ENCODE measurements at regions of chr19 and their contacts with region 1.

Region 1: GRCh38 chr19:55437410-55438075 is 5.6 kb downstream of the SHISA7 start:
- DNase-seq: peak; percentile 87 to 89
- ATAC-seq: peak; percentile 72 to 90
- H3K4me3 ChIP-seq: no peak overlapping the region
- H3K27ac ChIP-seq: no peak overlapping the region
- H3K4me1 ChIP-seq: peaks cover 12% of the 10 kb centered on the region
- CTCF ChIP-seq: no peak
- EP300 ChIP-seq: no peak
- POLR2A ChIP-seq: no peak
- RAD21 ChIP-seq: no peak

Region 2: GRCh38 chr19:55452749-55453346 is 15.3 kb after region 1 on chr19:
- CTCF ChIA-PET with region 1: interaction called, 11 read pairs
- POLR2A ChIA-PET with region 1: no interaction called
- DNase-seq: peak; percentile 66 to 80
- ATAC-seq: peak in 1 of 2 experiments; percentile 63; a peak in 3 of 6 replicates
- H3K4me3 ChIP-seq: no peak overlapping the region
- H3K27ac ChIP-seq: no peak overlapping the region
- H3K4me1 ChIP-seq: peaks cover 31% of the 10 kb centered on the region
- CTCF ChIP-seq: no peak
- EP300 ChIP-seq: no peak
- POLR2A ChIP-seq: no peak
- RAD21 ChIP-seq: no peak

Region 3: GRCh38 chr19:55484593-55485438 is 47.3 kb after region 1 on chr19 and contains the start of gene NAT14:
- CTCF ChIA-PET with region 1: no interaction called
- POLR2A ChIA-PET with region 1: no interaction called
- DNase-seq: peak; percentile 77 to 94
- ATAC-seq: peak; percentile 33 to 71
- H3K4me3 ChIP-seq: peak within 1 kb of the TSS; percentile 75
- H3K27ac ChIP-seq: peak within 1 kb of the TSS; percentile 89 to 93
- H3K4me1 ChIP-seq: peaks cover 50% of the 10 kb centered on the region
- CTCF ChIP-seq: no peak
- EP300 ChIP-seq: no peak
- POLR2A ChIP-seq: peak; percentile 22
- RAD21 ChIP-seq: no peak
- polyA plus RNA-seq, gene NAT14: 16.8 and 21.0 TPM in 2 replicates